Heart left ventricle (tissue), 16 donors: ENCODE measurements at regions of chr3 and their contacts with region 1.

Region 1: DNA sequence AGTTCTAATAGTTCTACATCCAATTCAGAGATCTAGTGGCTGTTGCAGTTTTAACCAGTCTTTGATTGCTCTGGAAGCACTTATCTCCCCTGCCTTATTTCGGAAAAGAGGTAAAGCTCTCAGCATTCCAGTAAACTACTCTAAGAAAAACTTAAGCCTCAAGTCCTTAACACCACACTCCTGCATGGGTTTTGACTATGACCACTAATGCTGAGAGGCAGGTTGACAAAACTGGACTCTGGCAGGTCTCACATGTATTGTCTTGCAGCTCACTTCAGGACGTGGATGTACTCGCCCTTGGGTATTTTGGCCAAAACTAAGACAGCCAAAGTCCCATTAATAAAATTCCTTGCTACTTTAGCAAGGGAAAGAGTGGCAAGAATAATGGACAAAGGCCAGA is 405.9 kb upstream of the GRM7 start:
- DNase-seq: no peak
- ATAC-seq: no peak
- H3K4me3 ChIP-seq: no peak overlapping the region
- H3K27ac ChIP-seq: no peak overlapping the region
- H3K4me1 ChIP-seq: no peaks in the 10 kb centered on the region
- H3K27me3 ChIP-seq: no peaks in the 10 kb centered on the region
- CTCF ChIP-seq: no peak
- POLR2A ChIP-seq: no peak

Region 2: DNA sequence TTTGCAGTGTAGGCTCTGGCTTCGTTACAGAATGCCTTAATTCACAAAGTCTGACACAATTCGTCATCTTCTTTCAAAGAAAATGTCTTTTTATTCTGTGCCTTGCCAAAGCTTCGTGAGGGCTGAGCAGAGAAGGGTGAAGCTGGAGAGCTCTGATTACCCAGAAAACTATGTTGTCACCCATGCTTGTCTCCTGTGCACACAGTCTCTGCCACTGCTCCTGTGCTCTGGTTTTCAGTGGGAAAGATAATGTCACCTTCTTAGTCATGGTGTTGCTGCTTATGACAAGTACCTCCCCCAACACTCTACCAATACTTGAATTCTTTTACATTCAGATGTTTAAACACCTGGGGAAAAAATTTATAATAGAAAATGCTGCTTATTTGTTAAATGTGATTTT is 103.3 kb before region 1 on chr3:
- intact Hi-C with region 1: loop called in 1 of 10 experiments (anchors 5 kb)
- DNase-seq: no peak
- ATAC-seq: no peak
- H3K4me3 ChIP-seq: no peak overlapping the region
- H3K27ac ChIP-seq: no peak overlapping the region
- H3K4me1 ChIP-seq: no peaks in the 10 kb centered on the region
- H3K27me3 ChIP-seq: no peaks in the 10 kb centered on the region
- CTCF ChIP-seq: no peak
- POLR2A ChIP-seq: no peak